WTC11 (cell line): ENCODE measurements at regions of chr5 and their contacts with region 1.

Region 1: GRCh38 chr5:151164686-151165392 is 7.3 kb upstream of the ANXA6 start:
- DNase-seq: peak; percentile 81
- ATAC-seq: peak; percentile 96
- H3K4me3 Mint-ChIP-seq: no peak overlapping the region
- H3K27ac Mint-ChIP-seq: no peak overlapping the region
- H3K4me1 Mint-ChIP-seq: peaks cover 6% of the 10 kb centered on the region
- H3K27me3 Mint-ChIP-seq: 0 out of 2 replicates have a peak, but pooled peaks cover 4% of the 10 kb centered on the region
- CTCF ChIP-seq: peak; percentile 69

Region 2: GRCh38 chr5:150895431-150896428 is 269.1 kb before region 1 on chr5:
- CTCF ChIA-PET with region 1: no interaction called
- POLR2A ChIA-PET with region 1: no interaction called
- DNase-seq: no peak
- ATAC-seq: no peak
- H3K4me3 Mint-ChIP-seq: no peak overlapping the region
- H3K27ac Mint-ChIP-seq: no peak overlapping the region
- H3K4me1 Mint-ChIP-seq: no peaks in the 10 kb centered on the region
- H3K27me3 Mint-ChIP-seq: peaks cover 16% of the 10 kb centered on the region
- CTCF ChIP-seq: no peak

Region 3: DNA sequence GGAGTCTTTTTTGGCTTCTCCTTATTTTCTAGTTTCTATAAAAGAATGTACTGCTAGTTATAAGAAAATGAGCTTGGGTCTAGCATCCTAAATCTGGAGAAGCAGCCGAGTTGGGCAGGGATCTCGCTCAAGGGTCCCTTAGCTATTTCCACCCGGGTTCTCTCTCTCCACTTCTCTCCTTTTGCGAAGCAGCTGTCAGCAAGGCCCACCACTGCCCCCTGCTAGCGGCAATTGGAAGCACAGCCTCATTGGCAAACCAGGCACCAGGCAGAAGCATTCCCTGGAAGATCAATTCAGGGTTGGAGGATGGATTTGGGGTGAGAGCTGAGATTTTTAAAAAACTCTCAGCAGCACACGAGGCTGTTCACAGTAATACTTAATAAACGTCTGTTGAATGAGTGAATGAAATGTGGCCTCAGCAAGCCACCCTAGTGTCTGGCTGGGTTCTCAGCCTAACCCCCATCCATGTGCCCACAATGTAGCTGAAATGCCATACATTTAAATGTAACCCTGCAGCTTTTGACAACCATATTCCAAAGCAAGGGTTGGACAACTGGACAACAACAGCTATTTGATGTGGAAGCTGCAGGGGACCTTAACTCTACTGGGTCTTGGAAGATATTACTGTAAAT is 49.4 kb before region 1 on chr5:
- CTCF ChIA-PET with region 1: interaction called, 53 read pairs
- POLR2A ChIA-PET with region 1: no interaction called
- DNase-seq: peak; percentile 88
- ATAC-seq: peak; percentile 86
- H3K4me3 Mint-ChIP-seq: no peak overlapping the region
- H3K27ac Mint-ChIP-seq: no peak overlapping the region
- H3K4me1 Mint-ChIP-seq: no peaks in the 10 kb centered on the region
- H3K27me3 Mint-ChIP-seq: no peaks in the 10 kb centered on the region; the same call in 1 of the 2 replicates
- CTCF ChIP-seq: peak; percentile 87

Region 4: DNA sequence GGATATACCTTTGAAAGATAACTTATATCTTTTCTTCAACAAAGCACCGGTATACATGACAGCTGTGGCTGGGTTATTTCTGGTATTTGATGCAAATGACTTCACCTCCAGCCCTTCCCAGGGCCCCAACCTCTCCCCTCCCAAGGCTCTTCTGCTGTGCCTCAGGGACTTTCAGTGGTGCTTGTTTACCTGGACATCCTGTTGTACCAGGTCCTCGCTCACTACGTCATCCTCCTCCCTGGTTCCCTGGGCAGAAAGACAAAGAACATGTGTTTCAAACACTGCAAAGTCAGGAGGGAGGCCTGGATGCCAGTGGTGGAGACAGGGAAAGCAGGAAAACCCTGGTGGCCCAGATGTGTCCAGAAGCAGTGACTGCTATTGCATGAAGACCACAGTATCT is 30.6 kb before region 1 on chr5:
- CTCF ChIA-PET with region 1: interaction called, 10 read pairs
- POLR2A ChIA-PET with region 1: no interaction called
- DNase-seq: no peak
- ATAC-seq: no peak
- H3K4me3 Mint-ChIP-seq: no peak overlapping the region
- H3K27ac Mint-ChIP-seq: no peak overlapping the region
- H3K4me1 Mint-ChIP-seq: peaks cover 3% of the 10 kb centered on the region; the same call in 1 of the 2 replicates
- H3K27me3 Mint-ChIP-seq: no peaks in the 10 kb centered on the region
- CTCF ChIP-seq: no peak

Region 5: GRCh38 chr5:151150471-151151262 is 14.2 kb before region 1 on chr5:
- CTCF ChIA-PET with region 1: interaction called, 12 read pairs
- POLR2A ChIA-PET with region 1: no interaction called
- DNase-seq: no peak
- ATAC-seq: peak; percentile 27
- H3K4me3 Mint-ChIP-seq: no peak overlapping the region
- H3K27ac Mint-ChIP-seq: 0 out of 2 replicates have a peak overlapping the region, but pooled peaks have one; percentile 4
- H3K4me1 Mint-ChIP-seq: peaks cover 21% of the 10 kb centered on the region
- H3K27me3 Mint-ChIP-seq: no peaks in the 10 kb centered on the region
- CTCF ChIP-seq: no peak

Region 6: DNA sequence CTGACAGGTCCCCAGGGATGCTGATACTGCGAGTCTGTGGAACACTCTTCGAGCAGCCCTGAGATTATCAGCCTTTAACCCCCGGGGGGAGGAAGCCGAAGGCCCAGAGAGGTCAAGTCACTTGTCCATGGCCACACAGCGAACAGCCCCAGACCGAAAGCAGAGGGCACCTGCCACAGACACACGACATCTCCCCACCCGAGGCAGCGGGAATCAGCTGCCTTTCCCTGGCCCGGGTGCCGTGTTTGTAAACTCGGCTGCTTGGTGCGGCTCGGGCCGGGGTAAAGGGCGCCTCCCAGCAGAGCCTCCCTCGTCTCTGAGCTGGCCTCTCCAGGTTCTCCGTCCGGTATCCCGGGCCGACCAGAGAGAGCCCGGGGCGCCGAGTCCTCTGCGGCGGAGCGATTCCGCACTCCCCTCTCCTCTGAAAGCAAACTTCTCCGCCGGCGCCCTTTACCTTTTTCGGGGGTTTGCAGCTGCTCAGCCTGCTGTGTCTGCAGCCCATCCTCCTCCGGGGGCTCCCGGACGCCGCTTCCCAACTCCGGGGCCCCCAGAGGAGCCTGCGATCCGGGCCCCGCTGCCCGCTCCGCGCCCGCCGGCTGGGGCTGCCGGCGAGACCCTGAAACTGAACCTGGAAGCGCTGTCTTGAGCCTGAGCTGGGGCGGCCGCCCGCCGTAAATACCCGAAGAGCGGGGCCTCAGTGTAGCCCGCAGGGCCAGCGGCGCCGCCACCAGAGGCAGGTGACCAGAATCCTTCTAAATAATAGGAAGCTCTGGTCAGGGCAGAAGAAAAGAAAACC is 58.8 kb after region 1 on chr5 and contains the start of gene CCDC69:
- CTCF ChIA-PET with region 1: interaction called, 17 read pairs
- POLR2A ChIA-PET with region 1: no interaction called
- DNase-seq: peak; percentile 79
- ATAC-seq: peak; percentile 91
- H3K4me3 Mint-ChIP-seq: peak within 1 kb of the TSS; percentile 78
- H3K27ac Mint-ChIP-seq: no peak within 1 kb of the TSS
- H3K4me1 Mint-ChIP-seq: peaks cover 25% of the 10 kb centered on the region
- H3K27me3 Mint-ChIP-seq: no peaks in the 10 kb centered on the region; the same call in 1 of the 2 replicates
- CTCF ChIP-seq: no peak
- total RNA-seq, gene CCDC69: 8.2 to 12.4 TPM (median 8.6 TPM) in 3 replicates

Region 7: DNA sequence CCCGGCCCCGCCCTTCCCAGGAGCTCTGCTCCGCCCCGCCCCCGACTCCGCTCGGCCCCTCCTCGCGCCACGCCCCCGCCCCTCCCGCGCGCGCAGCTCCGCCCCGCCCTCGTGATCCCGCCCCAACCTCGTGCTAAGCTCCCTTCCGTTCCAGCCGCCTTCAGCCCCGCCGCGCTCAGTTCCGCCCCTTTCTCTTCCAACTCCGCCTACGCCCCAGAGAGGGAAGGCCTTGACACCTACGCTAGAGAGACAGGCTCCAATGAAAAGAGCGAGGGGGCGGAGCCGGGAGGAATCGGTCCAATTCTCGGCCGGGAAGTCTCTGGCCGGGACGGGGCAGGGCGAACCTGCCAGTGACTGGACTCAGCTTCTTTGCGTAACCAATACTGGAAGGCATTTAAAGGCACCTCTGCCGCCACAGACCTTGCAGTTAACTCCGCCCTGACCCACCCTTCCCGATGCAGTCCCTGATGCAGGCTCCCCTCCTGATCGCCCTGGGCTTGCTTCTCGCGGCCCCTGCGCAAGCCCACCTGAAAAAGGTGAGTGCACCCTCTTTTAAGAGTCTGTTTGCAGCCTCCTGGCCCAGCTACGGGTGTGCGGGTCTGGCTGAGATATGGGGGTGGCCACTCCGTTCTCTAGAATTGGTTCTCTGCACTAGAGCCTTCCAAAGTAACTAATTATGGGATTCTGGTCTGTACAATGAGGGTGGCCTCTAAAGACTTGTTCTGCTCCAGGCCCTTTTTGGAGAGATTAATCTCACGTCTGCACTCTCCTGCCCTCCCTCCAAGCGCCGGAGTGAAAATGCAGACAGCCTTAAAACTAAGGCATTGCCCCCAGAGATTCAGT is 88.1 kb after region 1 on chr5 and contains the start of gene GM2A:
- CTCF ChIA-PET with region 1: interaction called, 10 read pairs
- POLR2A ChIA-PET with region 1: no interaction called
- DNase-seq: peak; percentile 100
- ATAC-seq: peak; percentile 96
- H3K4me3 Mint-ChIP-seq: peak within 1 kb of the TSS; percentile 90
- H3K27ac Mint-ChIP-seq: peak within 1 kb of the TSS; percentile 92
- H3K4me1 Mint-ChIP-seq: peaks cover 35% of the 10 kb centered on the region
- H3K27me3 Mint-ChIP-seq: peaks cover 6% of the 10 kb centered on the region
- CTCF ChIP-seq: no peak
- total RNA-seq, gene GM2A: 33.1 to 36.2 TPM (median 33.2 TPM) in 3 replicates

Region 8: DNA sequence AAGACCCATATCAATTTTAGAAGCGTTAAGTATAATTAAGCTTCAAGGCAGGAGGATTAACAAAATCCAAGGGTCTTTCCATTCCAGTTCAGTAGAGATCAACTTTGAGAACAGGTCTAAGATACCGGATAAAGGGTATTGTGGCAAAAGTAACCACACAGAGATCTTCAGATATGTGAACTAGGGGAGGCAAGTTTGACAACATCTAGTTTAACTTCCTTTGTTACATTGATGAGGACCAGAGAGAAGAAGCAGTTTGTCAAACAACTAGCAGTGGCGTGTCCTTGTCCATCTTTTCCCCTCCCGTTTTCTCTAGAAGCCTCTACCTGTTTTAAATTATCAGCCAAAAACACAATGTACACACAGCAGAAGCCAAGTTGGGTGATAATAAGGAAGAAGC is 173.9 kb after region 1 on chr5:
- CTCF ChIA-PET with region 1: no interaction called
- POLR2A ChIA-PET with region 1: no interaction called
- DNase-seq: no peak
- ATAC-seq: no peak
- H3K4me3 Mint-ChIP-seq: no peak overlapping the region
- H3K27ac Mint-ChIP-seq: no peak overlapping the region
- H3K4me1 Mint-ChIP-seq: no peaks in the 10 kb centered on the region
- H3K27me3 Mint-ChIP-seq: peaks cover 13% of the 10 kb centered on the region
- CTCF ChIP-seq: no peak